HepG2 (cell line): ENCODE measurements at regions of chr2 and their contacts with region 1.

Region 1: GRCh38 chr2:188369365-188369764 is 77.7 kb downstream of the GULP1 start:
- DNase-seq: peak; percentile 57
- ATAC-seq: peak; percentile 99
- H3K4me3 ChIP-seq: no peak overlapping the region
- H3K27ac ChIP-seq: no peak overlapping the region
- H3K4me1 ChIP-seq: no peaks in the 10 kb centered on the region
- H3K27me3 ChIP-seq: no peaks in the 10 kb centered on the region
- CTCF ChIP-seq: peak; percentile 74
- EP300 ChIP-seq: no peak
- POLR2A ChIP-seq: no peak
- RAD21 ChIP-seq: 0 out of 2 replicates have a peak, but pooled peaks have one; percentile 12

Region 2: GRCh38 chr2:188065395-188065794 is 304.0 kb before region 1 on chr2:
- CTCF ChIA-PET with region 1: no interaction called
- POLR2A ChIA-PET with region 1: no interaction called
- in situ Hi-C with region 1: no loop called
- intact Hi-C with region 1: loop called (anchors 1 kb)
- DNase-seq: no peak
- ATAC-seq: peak; percentile 65
- H3K4me3 ChIP-seq: no peak overlapping the region
- H3K27ac ChIP-seq: no peak overlapping the region
- H3K4me1 ChIP-seq: no peaks in the 10 kb centered on the region
- H3K27me3 ChIP-seq: no peaks in the 10 kb centered on the region
- CTCF ChIP-seq: peak; percentile 25; the same call in 1 of the 2 replicates
- EP300 ChIP-seq: no peak
- POLR2A ChIP-seq: no peak
- RAD21 ChIP-seq: no peak

Region 3: DNA sequence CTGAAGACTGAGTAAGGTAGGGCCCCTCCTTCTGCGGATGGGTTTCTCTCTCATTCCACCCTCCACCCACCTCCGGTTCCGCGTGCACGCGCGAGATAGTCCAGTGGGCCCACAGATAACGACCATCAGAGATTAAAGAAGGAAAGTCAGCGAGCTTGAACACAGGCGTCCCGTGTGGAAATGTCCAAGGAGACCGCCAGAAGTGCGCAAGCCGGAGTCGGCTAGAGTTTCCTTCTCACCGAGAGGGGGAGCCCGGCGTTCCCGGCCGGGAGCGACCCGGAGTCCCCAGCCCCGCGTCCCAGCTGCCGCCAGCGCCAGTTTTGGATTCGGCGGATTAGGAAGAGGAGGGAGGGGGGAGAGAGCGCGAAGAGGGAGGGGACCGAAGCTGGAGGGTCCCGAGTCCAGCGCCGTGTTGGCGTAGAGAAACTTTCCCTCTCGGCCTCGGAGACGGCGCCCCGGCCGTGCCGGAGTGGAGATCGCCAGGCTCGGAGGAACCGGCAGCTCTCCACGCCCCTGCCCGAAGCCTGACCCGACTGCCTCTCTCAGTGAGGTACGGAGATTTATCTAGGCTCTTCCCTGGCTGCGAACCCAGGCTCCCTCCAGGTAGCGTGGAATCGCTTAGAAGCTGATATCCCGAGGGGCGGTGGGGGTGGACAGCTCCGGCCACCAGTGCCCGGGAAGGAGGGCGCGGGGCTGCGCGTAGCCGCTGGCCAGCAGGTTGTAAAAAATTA is 77.6 kb before region 1 on chr2 and contains the start of gene GULP1:
- CTCF ChIA-PET with region 1: interaction called, 5 read pairs
- POLR2A ChIA-PET with region 1: no interaction called
- in situ Hi-C with region 1: no loop called
- intact Hi-C with region 1: loop called (anchors 5 kb)
- DNase-seq: peak; percentile 18
- ATAC-seq: peak; percentile 99
- H3K4me3 ChIP-seq: peak within 1 kb of the TSS; percentile 52 to 70 (median 54)
- H3K27ac ChIP-seq: no peak within 1 kb of the TSS
- H3K4me1 ChIP-seq: peaks cover 13% of the 10 kb centered on the region
- H3K27me3 ChIP-seq: peaks cover 0 to 28% of the 10 kb centered on the region in 2 experiments; a peak in 4 of 5 replicates
- CTCF ChIP-seq: peak; percentile 71
- EP300 ChIP-seq: no peak
- POLR2A ChIP-seq: no peak
- RAD21 ChIP-seq: 0 out of 2 replicates have a peak, but pooled peaks have one; percentile 32
- total RNA-seq, gene GULP1: not detected in 2 replicates